ENCODE measurements at regions of chr1 and their contacts with region 1.

Region 1: GRCh38 chr1:31904339-31905092 is 33.7 kb downstream of the PTP4A2 start:
- DNase-seq: peak in 1 of 2 experiments; percentile 33
- ATAC-seq: peak; percentile 14 to 19; a peak in 2 of 6 replicates
- H3K4me3 ChIP-seq: no peak overlapping the region
- H3K27ac ChIP-seq: 0 out of 6 replicates have a peak overlapping the region, but pooled peaks of 1 of the 2 experiments have one; percentile 12
- H3K4me1 ChIP-seq: peaks cover 9% of the 10 kb centered on the region; the same call in 2 of the 3 replicates
- CTCF ChIP-seq: no peak
- EP300 ChIP-seq: no peak
- POLR2A ChIP-seq: no peak
- RAD21 ChIP-seq: no peak

Region 2: GRCh38 chr1:31961536-31961935 is 57.0 kb after region 1 on chr1:
- CTCF ChIA-PET with region 1: interaction called, 24 read pairs
- POLR2A ChIA-PET with region 1: no interaction called
- DNase-seq: no peak
- ATAC-seq: no peak
- H3K4me3 ChIP-seq: no peak overlapping the region
- H3K27ac ChIP-seq: peak overlapping the region; percentile 40 to 99; a peak in 4 of 6 replicates
- H3K4me1 ChIP-seq: peaks cover 36% of the 10 kb centered on the region
- CTCF ChIP-seq: no peak
- EP300 ChIP-seq: no peak
- POLR2A ChIP-seq: no peak
- RAD21 ChIP-seq: no peak

Measured in A549 (cell line).